ENCODE measurements at regions of chr2 and their contacts with region 1.

Region 1: DNA sequence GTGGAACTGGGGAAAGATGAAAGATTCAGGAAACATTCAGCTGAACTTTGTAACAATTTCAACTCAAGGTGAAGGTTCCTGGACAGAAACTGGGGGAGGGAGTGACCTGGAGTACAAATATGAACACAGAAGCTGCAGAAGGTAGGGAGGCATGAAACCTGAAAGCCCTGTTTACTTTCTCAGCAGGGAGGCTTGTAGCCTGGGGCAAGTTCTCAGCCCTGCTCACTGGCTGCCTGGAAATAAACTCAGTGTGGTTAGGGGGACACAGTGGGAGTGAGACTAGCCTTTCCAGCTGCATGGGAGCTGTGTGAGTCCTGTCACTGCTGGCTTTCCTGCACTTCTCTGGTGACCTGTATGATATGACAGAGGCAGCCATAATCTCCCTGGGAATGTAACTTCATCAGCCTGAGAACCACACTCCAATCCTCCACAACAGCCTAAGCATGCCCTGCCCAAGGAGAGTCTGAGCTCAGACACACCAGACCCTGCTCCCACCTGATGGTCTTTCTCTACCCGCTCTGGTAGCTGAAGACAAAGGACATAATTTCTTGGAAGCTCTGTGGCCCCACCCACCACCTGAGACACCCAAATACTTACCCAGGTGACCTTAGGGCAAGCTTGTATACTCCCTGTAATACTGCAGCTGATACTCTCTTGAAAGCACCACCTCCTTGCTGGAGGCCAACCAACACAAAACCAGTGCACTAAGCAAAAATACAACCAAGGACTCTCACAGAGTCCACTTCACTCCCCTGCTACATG is 76.9 kb downstream of the ZSWIM2 start:
- DNase-seq: no peak
- ATAC-seq: no peak
- H3K4me3 ChIP-seq: no peak overlapping the region
- H3K4me3 Mint-ChIP-seq: no peak overlapping the region
- H3K27ac ChIP-seq: no peak overlapping the region
- H3K27ac Mint-ChIP-seq: no peak overlapping the region
- H3K4me1 ChIP-seq: no peaks in the 10 kb centered on the region
- H3K4me1 Mint-ChIP-seq: no peaks in the 10 kb centered on the region
- H3K27me3 ChIP-seq: no peaks in the 10 kb centered on the region
- H3K27me3 Mint-ChIP-seq: peaks cover 15% of the 10 kb centered on the region
- CTCF ChIP-seq: no peak

Region 2: DNA sequence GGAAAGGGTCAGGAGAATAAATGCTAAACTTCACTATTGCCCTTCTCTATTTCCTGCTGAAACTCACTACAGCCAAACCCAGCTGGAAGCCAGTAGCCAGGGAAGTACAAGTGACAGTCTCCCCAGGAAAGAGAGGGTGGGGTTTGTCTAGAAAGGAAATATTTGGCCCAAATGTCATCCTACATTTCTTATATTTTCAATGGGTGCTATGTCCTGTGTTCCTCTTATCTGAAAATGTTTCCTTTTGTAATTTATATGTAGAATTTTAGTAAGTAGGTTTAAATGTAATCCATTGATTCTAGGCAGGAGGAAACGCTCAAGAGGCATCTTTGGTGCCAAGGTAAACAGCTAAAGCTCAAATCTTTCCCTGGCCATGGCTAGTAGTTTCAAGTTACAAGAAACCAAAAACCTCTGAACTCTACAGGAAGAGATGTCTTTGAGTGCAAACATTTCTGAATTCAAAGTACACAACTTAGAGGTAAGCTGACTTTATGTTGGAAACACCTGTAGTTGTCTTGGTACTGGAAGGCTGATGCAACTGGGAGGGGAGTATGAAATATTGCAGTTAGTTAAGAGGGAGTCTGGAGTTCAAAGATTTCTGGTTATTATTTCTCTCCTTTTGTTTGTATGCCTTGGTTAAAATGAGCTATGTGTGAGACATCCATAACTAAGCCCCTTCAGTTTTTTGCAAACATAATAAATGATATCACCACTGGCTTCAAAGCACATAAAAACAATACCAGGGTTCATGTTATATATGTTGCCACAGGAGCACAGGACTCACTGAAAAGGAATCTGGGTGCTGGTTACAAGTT is 642.1 kb before region 1 on chr2:
- CTCF ChIA-PET with region 1: no interaction called
- POLR2A ChIA-PET with region 1: no interaction called
- intact Hi-C with region 1: loop called in 1 of 2 experiments (anchors 10 kb)
- DNase-seq: no peak
- ATAC-seq: no peak
- H3K4me3 ChIP-seq: no peak overlapping the region
- H3K4me3 Mint-ChIP-seq: no peak overlapping the region
- H3K27ac ChIP-seq: no peak overlapping the region
- H3K27ac Mint-ChIP-seq: no peak overlapping the region
- H3K4me1 ChIP-seq: no peaks in the 10 kb centered on the region
- H3K4me1 Mint-ChIP-seq: no peaks in the 10 kb centered on the region
- H3K27me3 ChIP-seq: no peaks in the 10 kb centered on the region
- H3K27me3 Mint-ChIP-seq: no peaks in the 10 kb centered on the region
- CTCF ChIP-seq: no peak

Measured in CD8-positive, alpha-beta T cell (primary cell).